ENCODE measurements at regions of chr5 and their contacts with region 1.

Region 1: DNA sequence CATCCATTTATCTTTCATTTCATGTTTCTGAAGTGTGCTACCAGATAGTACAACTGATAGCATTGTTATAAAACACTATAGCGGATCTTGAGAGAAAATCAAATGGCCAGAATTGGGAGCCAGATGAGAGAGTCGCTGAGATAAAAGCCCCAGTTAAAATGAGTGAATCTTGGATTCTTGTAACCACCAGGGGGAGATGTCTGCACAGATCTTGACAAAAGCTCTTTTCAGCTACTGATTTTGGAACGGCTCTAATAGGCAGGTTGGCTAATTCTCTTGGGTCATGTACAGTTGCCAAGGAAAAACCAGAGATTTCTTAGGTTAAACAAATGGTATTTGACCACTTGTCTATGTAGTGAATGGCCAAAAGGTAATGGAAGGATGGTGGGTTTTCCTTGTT is 21.7 kb downstream of the F2RL2 start:
- DNase-seq: peak; percentile 41
- H3K4me3 Mint-ChIP-seq: no peak overlapping the region
- H3K27ac Mint-ChIP-seq: no peak overlapping the region
- H3K4me1 Mint-ChIP-seq: peaks cover 2% of the 10 kb centered on the region
- H3K27me3 Mint-ChIP-seq: no peaks in the 10 kb centered on the region

Region 2: GRCh38 chr5:76134546-76135045 is 466.9 kb before region 1 on chr5:
- CTCF ChIA-PET with region 1: no interaction called
- intact Hi-C with region 1: no loop called
- DNase-seq: no peak
- H3K4me3 Mint-ChIP-seq: no peak overlapping the region
- H3K27ac Mint-ChIP-seq: no peak overlapping the region
- H3K4me1 Mint-ChIP-seq: no peaks in the 10 kb centered on the region
- H3K27me3 Mint-ChIP-seq: peaks cover 4% of the 10 kb centered on the region

Region 3: GRCh38 chr5:76641514-76642120 is 40.1 kb after region 1 on chr5:
- CTCF ChIA-PET with region 1: interaction called, 7 read pairs
- intact Hi-C with region 1: loop called (anchors 1 kb)
- DNase-seq: peak; percentile 87
- H3K4me3 Mint-ChIP-seq: no peak overlapping the region
- H3K27ac Mint-ChIP-seq: no peak overlapping the region
- H3K4me1 Mint-ChIP-seq: peaks cover 4% of the 10 kb centered on the region
- H3K27me3 Mint-ChIP-seq: no peaks in the 10 kb centered on the region

Region 4: GRCh38 chr5:77015938-77016569 is 414.6 kb after region 1 on chr5:
- CTCF ChIA-PET with region 1: no interaction called
- intact Hi-C with region 1: loop called (anchors 10 kb)
- DNase-seq: no peak
- H3K4me3 Mint-ChIP-seq: no peak overlapping the region
- H3K27ac Mint-ChIP-seq: no peak overlapping the region
- H3K4me1 Mint-ChIP-seq: peaks cover 3% of the 10 kb centered on the region
- H3K27me3 Mint-ChIP-seq: peaks cover 17% of the 10 kb centered on the region

Region 5: GRCh38 chr5:77076961-77077823 is 475.7 kb after region 1 on chr5:
- CTCF ChIA-PET with region 1: no interaction called
- intact Hi-C with region 1: loop called (anchors 10 kb)
- DNase-seq: peak; percentile 61
- H3K4me3 Mint-ChIP-seq: peak overlapping the region; percentile 37
- H3K27ac Mint-ChIP-seq: no peak overlapping the region
- H3K4me1 Mint-ChIP-seq: peaks cover 7% of the 10 kb centered on the region
- H3K27me3 Mint-ChIP-seq: no peaks in the 10 kb centered on the region